ENCODE measurements at regions of chr3 and their contacts with region 1.

Region 1: GRCh38 chr3:50227390-50228183 is 8.4 kb upstream of the GNAI2 start:
- DNase-seq: peak; percentile 89 to 95
- ATAC-seq: peak; percentile 82 to 93 (median 86)
- H3K4me3 ChIP-seq: peak overlapping the region; percentile 68
- H3K4me3 Mint-ChIP-seq: peak overlapping the region; percentile 98
- H3K27ac ChIP-seq: peak overlapping the region; percentile 66
- H3K27ac Mint-ChIP-seq: peak overlapping the region; percentile 86 to 92
- H3K4me1 ChIP-seq: peaks cover 41% of the 10 kb centered on the region
- H3K4me1 Mint-ChIP-seq: peaks cover 16 to 23% of the 10 kb centered on the region in 2 donors
- H3K27me3 ChIP-seq: no peaks in the 10 kb centered on the region
- H3K27me3 Mint-ChIP-seq: peaks cover 5 to 9% of the 10 kb centered on the region in 2 donors
- CTCF ChIP-seq: peak; percentile 77

Region 2: GRCh38 chr3:50088725-50089608 is 138.6 kb before region 1 on chr3 and contains the start of gene RBM5:
- intact Hi-C with region 1: no loop called
- DNase-seq: peak; percentile 87 to 95
- ATAC-seq: peak; percentile 97 to 100 (median 99)
- H3K4me3 ChIP-seq: peak within 1 kb of the TSS; percentile 96
- H3K4me3 Mint-ChIP-seq: peak within 1 kb of the TSS; percentile 95
- H3K27ac ChIP-seq: peak within 1 kb of the TSS; percentile 98
- H3K27ac Mint-ChIP-seq: peak within 1 kb of the TSS; percentile 93 to 96
- H3K4me1 ChIP-seq: peaks cover 12% of the 10 kb centered on the region
- H3K4me1 Mint-ChIP-seq: peaks cover 27 to 35% of the 10 kb centered on the region in 2 donors
- H3K27me3 ChIP-seq: no peaks in the 10 kb centered on the region
- H3K27me3 Mint-ChIP-seq: no peaks in the 10 kb centered on the region
- CTCF ChIP-seq: no peak
- total RNA-seq, gene RBM5: 359 to 473 (median 401) TPM

Region 3: GRCh38 chr3:50121416-50122032 is 106.1 kb before region 1 on chr3:
- intact Hi-C with region 1: loop called (anchors 1 kb)
- DNase-seq: peak; percentile 68 to 88
- ATAC-seq: peak; percentile 79 to 90 (median 81)
- H3K4me3 ChIP-seq: no peak overlapping the region
- H3K4me3 Mint-ChIP-seq: no peak overlapping the region
- H3K27ac ChIP-seq: no peak overlapping the region
- H3K27ac Mint-ChIP-seq: peak overlapping the region in 1 of 2 donors; percentile 74
- H3K4me1 ChIP-seq: no peaks in the 10 kb centered on the region
- H3K4me1 Mint-ChIP-seq: peaks cover 8% of the 10 kb centered on the region in 2 donors
- H3K27me3 ChIP-seq: no peaks in the 10 kb centered on the region
- H3K27me3 Mint-ChIP-seq: no peaks in the 10 kb centered on the region
- CTCF ChIP-seq: peak; percentile 79

Region 4: DNA sequence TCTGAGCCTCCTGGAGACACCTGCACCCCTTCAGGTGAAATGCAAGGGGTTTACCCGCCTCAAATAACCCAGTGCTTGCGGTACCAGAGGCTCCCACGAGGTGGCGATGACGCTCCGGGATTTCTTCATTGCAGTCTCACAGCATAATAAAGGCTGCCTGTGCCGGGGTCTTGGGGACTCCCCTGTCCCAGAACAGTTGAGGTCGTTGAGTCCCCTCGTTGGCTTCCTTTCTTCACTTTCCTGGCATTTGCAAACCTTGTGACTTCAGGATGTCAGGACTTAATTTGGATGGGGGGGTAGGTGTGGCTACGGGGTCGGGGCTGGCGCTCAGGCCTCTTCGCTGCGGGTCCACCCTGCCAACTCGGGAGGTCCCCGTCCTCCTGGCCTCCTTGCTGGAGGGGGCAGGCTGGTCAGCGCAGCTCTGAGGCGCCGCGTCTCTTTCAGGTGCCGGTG is 34.9 kb before region 1 on chr3:
- intact Hi-C with region 1: loop called (anchors 1 kb)
- DNase-seq: peak; percentile 81 to 91
- ATAC-seq: peak; percentile 54 to 69 (median 58)
- H3K4me3 ChIP-seq: no peak overlapping the region
- H3K4me3 Mint-ChIP-seq: no peak overlapping the region
- H3K27ac ChIP-seq: no peak overlapping the region
- H3K27ac Mint-ChIP-seq: no peak overlapping the region
- H3K4me1 ChIP-seq: peaks cover 21% of the 10 kb centered on the region
- H3K4me1 Mint-ChIP-seq: peaks cover 0 to 6% of the 10 kb centered on the region in 2 donors
- H3K27me3 ChIP-seq: peaks cover 12% of the 10 kb centered on the region
- H3K27me3 Mint-ChIP-seq: peaks cover 7 to 12% of the 10 kb centered on the region in 2 donors
- CTCF ChIP-seq: peak; percentile 83

Region 5: GRCh38 chr3:50245831-50246516 is 18.4 kb after region 1 on chr3:
- intact Hi-C with region 1: loop called (anchors 1 kb)
- DNase-seq: peak; percentile 96 to 98
- ATAC-seq: peak; percentile 76 to 92 (median 84)
- H3K4me3 ChIP-seq: peak overlapping the region; percentile 24
- H3K4me3 Mint-ChIP-seq: peak overlapping the region; percentile 86
- H3K27ac ChIP-seq: peak overlapping the region; percentile 85
- H3K27ac Mint-ChIP-seq: peak overlapping the region; percentile 95
- H3K4me1 ChIP-seq: peaks cover 100% of the 10 kb centered on the region
- H3K4me1 Mint-ChIP-seq: peaks cover 69 to 88% of the 10 kb centered on the region in 2 donors
- H3K27me3 ChIP-seq: no peaks in the 10 kb centered on the region
- H3K27me3 Mint-ChIP-seq: no peaks in the 10 kb centered on the region
- CTCF ChIP-seq: peak; percentile 98

Region 6: DNA sequence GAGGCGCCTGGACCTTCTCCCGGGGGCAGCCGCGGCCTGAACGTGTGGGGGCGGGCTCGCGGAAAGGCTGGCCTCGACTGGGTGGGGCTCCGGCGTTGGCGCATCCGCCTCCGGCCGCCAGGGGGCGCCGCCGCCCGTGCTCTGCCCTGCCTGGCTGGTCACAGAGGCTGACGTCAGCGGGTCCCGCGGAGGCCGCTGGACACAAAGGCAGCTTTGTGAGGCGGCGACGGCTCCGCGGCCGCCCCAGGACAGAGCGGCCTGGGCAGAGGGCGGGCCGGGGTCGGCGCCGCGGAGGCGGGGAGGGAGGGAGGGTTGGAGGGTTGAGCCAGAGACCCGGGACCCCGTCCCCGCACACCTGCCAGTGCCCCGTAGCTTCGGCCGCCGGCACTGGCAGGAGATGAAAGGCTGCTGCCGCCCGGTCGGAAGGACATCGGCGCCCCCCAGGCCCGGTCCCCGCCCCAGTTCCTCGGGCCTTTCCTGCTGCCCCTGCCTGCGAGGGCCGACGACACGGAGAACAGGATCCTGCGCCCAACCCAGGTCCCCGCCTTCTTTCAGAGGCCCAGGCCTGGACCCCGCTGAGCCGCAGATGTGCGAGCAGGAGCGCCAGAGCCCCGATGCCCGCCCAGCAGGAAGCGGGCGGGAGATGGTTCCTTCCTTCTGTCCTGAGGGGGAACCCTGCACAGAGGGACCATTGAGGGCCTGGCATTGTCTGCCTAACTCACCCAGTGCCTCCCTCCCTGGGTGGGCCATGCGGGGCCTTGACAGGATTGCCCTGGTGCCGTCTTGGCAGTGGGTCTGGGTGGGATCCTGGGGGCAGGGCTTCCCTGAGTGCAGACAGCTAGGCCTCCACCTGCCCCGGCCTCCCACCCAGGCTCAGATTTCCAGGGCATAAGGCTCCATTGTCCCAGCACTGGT is 32.7 kb after region 1 on chr3:
- intact Hi-C with region 1: loop called (anchors 1 kb)
- DNase-seq: peak; percentile 92
- ATAC-seq: peak; percentile 95 to 98 (median 95)
- H3K4me3 ChIP-seq: peak overlapping the region; percentile 44
- H3K4me3 Mint-ChIP-seq: peak overlapping the region; percentile 77
- H3K27ac ChIP-seq: peak overlapping the region; percentile 77
- H3K27ac Mint-ChIP-seq: peak overlapping the region; percentile 71 to 84
- H3K4me1 ChIP-seq: peaks cover 20% of the 10 kb centered on the region
- H3K4me1 Mint-ChIP-seq: peaks cover 5 to 16% of the 10 kb centered on the region in 2 donors
- H3K27me3 ChIP-seq: no peaks in the 10 kb centered on the region
- H3K27me3 Mint-ChIP-seq: no peaks in the 10 kb centered on the region
- CTCF ChIP-seq: peak; percentile 92

Region 7: GRCh38 chr3:50272911-50273693 is 45.5 kb after region 1 on chr3:
- intact Hi-C with region 1: loop called (anchors 1 kb)
- DNase-seq: peak; percentile 89 to 91
- ATAC-seq: peak; percentile 90 to 94 (median 93)
- H3K4me3 ChIP-seq: no peak overlapping the region
- H3K4me3 Mint-ChIP-seq: peak overlapping the region; percentile 70
- H3K27ac ChIP-seq: no peak overlapping the region
- H3K27ac Mint-ChIP-seq: peak overlapping the region; percentile 67 to 82
- H3K4me1 ChIP-seq: peaks cover 33% of the 10 kb centered on the region
- H3K4me1 Mint-ChIP-seq: peaks cover 11 to 32% of the 10 kb centered on the region in 2 donors
- H3K27me3 ChIP-seq: peaks cover 38% of the 10 kb centered on the region
- H3K27me3 Mint-ChIP-seq: peaks cover 13 to 35% of the 10 kb centered on the region in 2 donors
- CTCF ChIP-seq: peak; percentile 96

Region 8: DNA sequence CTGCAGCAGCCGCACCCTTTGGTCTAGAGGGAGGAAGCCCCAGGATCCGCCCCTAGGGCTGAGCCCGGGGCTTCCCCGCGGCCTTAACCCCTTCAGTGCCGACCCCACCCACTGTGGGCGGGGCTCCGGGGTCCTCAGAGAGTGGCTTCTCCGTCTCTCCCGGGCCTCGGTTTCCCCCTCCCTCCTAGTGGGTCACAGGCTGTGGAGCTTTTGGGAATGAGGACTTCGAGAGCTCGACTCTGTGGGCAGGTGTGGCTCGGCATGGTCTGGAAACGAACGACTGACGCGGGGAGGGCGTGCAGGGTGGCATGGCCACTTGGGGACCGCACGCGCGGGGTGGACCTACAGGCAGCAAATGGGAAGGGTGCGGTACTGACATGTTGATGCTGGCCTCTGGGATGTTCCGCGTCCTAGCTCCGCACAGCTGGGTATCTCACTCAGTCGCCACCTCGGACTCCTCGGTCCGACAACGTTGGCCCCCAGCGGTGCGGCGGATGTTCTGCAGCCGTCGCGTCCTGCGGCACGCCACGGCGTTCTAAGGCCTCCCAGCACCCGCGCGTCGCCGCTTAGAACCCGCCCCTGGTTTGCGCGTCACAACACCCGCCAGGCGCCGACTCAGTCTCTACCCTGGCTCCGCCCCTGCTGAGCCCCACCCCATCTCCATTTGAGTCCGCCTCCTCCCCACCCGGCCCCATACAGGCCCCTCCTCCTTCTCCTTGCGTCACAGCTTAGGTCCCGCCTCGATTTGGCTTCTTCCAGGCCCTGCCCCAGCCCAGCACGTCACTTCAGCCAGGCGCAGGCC is 71.5 kb after region 1 on chr3 and contains the starts of genes HYAL3 and NAA80:
- intact Hi-C with region 1: no loop called
- DNase-seq: peak; percentile 99 to 100
- ATAC-seq: peak; percentile 90 to 97 (median 91)
- H3K4me3 ChIP-seq: peak within 1 kb of the TSS; percentile 99
- H3K4me3 Mint-ChIP-seq: peak within 1 kb of the TSS; percentile 97
- H3K27ac ChIP-seq: peak within 1 kb of the TSS; percentile 96
- H3K27ac Mint-ChIP-seq: peak within 1 kb of the TSS; percentile 95 to 97
- H3K4me1 ChIP-seq: peaks cover 27% of the 10 kb centered on the region
- H3K4me1 Mint-ChIP-seq: peaks cover 18 to 33% of the 10 kb centered on the region in 2 donors
- H3K27me3 ChIP-seq: no peaks in the 10 kb centered on the region
- H3K27me3 Mint-ChIP-seq: no peaks in the 10 kb centered on the region
- CTCF ChIP-seq: peak; percentile 45
- total RNA-seq, gene HYAL3: 0.93 to 2.0 (median 1.2) TPM
- total RNA-seq, gene NAA80: 22.2 to 30.3 (median 29.6) TPM

Region 9: DNA sequence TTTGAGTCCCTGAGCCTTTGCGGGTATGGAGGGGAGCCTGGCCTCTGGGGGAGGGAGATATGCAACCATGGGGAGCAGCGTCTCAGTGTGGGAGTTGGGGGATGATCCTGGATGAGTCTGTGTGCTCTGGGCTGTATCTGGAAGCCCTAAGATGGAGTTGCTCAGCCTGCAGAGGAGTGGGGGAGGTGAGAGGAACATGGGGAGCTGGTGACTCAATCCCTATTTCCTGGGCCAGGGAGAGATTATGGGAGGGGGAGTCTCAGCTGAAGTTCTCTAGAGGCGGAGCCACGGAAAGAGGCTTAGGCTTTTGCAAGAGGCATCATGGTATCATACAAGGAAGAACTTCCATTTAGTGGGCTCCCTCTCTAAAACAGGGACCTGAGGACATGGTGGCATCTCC is 191.3 kb after region 1 on chr3:
- intact Hi-C with region 1: no loop called
- DNase-seq: no peak
- ATAC-seq: no peak
- H3K4me3 ChIP-seq: no peak overlapping the region
- H3K4me3 Mint-ChIP-seq: no peak overlapping the region
- H3K27ac ChIP-seq: no peak overlapping the region
- H3K27ac Mint-ChIP-seq: no peak overlapping the region
- H3K4me1 ChIP-seq: peaks cover 49% of the 10 kb centered on the region
- H3K4me1 Mint-ChIP-seq: peaks cover 40 to 62% of the 10 kb centered on the region in 2 donors
- H3K27me3 ChIP-seq: no peaks in the 10 kb centered on the region
- H3K27me3 Mint-ChIP-seq: no peaks in the 10 kb centered on the region
- CTCF ChIP-seq: no peak

Region 10: GRCh38 chr3:50542177-50543034 is 314.8 kb after region 1 on chr3:
- intact Hi-C with region 1: no loop called
- DNase-seq: peak; percentile 63 to 81
- ATAC-seq: peak; percentile 51 to 86 (median 77)
- H3K4me3 ChIP-seq: no peak overlapping the region
- H3K4me3 Mint-ChIP-seq: no peak overlapping the region
- H3K27ac ChIP-seq: no peak overlapping the region
- H3K27ac Mint-ChIP-seq: no peak overlapping the region
- H3K4me1 ChIP-seq: peaks cover 24% of the 10 kb centered on the region
- H3K4me1 Mint-ChIP-seq: peaks cover 15 to 41% of the 10 kb centered on the region in 2 donors
- H3K27me3 ChIP-seq: no peaks in the 10 kb centered on the region
- H3K27me3 Mint-ChIP-seq: peaks cover 3 to 11% of the 10 kb centered on the region in 2 donors
- CTCF ChIP-seq: peak; percentile 91

Measured in natural killer cell (primary cell).